Activated naive CD4-positive, alpha-beta T cell treated with anti-CD3 and anti-CD28 coated beads for 36 hours (primary cell): ENCODE measurements at regions of chr1 and their contacts with region 1.

Region 1: GRCh38 chr1:170074250-170075157 is at the start of gene KIFAP3:
- DNase-seq: peak; percentile 98
- H3K4me3 Mint-ChIP-seq: peak within 1 kb of the TSS; percentile 92
- H3K27ac Mint-ChIP-seq: peak within 1 kb of the TSS; percentile 74
- H3K4me1 Mint-ChIP-seq: peaks cover 48% of the 10 kb centered on the region
- H3K27me3 Mint-ChIP-seq: no peaks in the 10 kb centered on the region
- total RNA-seq, gene KIFAP3: 8.7 to 8.8 TPM

Region 2: DNA sequence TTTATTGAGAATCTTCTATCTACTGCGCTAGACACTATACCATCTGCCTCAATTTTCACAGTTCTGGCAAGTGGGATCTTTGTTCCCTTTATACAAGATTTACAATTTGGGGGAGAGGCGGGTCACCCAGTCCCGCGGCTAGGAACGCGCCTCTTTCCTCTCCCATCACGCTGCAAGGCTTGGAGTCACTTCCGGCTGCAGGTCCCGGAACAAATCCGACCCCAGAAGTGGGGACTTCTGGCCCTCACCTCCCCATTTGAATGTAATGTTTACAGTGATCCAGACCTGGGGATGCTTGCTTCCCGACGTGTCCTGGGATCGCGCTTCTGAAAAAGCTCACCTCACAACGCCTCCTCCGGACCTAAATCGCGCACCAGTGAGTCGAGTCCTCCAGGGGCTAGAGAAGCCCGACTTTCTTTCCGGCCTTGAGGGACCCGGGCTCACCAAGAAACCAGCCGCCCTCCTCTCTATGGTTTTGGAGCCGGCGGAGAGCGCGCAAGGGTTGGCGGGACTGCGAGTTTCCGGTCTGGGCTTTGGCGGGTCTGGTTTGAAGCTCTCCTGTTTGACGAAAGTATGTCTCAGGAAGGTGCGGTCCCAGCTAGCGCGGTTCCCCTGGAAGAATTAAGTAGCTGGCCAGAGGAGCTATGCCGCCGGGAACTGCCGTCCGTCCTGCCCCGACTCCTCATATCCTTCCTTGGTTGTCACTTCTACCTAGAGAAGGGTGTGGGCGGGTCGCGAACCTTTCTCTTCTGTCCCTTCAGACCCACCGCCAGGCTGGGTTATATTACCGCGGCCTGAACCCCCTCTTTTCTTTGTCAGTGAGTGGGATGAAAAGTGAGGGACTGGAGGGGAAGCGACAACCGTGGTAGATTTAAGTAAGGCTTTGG is 279.7 kb before region 1 on chr1 and contains the start of gene METTL18:
- CTCF ChIA-PET with region 1: no interaction called
- intact Hi-C with region 1: loop called (anchors 1 kb)
- DNase-seq: peak; percentile 97
- H3K4me3 Mint-ChIP-seq: peak within 1 kb of the TSS; percentile 99
- H3K27ac Mint-ChIP-seq: peak within 1 kb of the TSS; percentile 99
- H3K4me1 Mint-ChIP-seq: peaks cover 48% of the 10 kb centered on the region
- H3K27me3 Mint-ChIP-seq: no peaks in the 10 kb centered on the region
- total RNA-seq, gene METTL18: 10.6 to 11.1 TPM

Region 3: DNA sequence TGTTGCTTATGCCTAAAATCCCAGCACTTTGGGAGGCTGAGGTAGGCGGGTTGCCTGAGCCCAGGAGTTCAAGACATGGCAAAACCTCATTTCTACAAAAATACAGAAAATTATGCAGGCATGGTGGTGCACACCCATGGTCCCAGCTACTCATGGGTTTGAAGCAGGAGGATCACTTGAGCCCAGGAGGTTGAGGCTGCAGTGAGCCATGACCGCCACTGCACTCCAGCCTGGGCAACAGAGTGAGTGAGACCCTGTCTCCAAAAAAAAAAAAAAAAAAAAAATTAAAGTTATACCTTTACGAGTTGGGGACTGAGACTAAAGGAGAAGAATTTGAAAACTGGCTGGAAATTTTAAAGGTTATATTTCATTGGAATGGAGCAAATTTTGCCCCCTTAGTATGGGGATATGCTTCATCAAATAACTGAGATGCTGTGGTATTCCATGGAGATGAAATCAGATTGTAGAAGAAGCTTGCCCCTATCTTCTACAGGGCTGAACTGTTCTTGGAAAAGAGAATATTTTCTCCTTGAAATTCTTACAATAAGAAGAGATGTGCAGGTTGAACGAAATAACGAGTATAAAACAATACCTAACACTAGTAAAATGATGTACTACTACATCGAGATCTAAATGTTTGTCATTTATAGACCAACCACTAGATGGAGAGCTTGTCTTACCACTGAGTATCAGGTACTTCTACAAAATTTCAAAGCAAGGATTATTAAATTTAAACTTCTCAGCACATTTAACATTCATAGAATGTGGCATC is 145.9 kb before region 1 on chr1:
- CTCF ChIA-PET with region 1: interaction called, 4 read pairs
- intact Hi-C with region 1: loop called (anchors 1 kb)
- DNase-seq: no peak
- H3K4me3 Mint-ChIP-seq: no peak overlapping the region
- H3K27ac Mint-ChIP-seq: no peak overlapping the region
- H3K4me1 Mint-ChIP-seq: peaks cover 3% of the 10 kb centered on the region
- H3K27me3 Mint-ChIP-seq: no peaks in the 10 kb centered on the region

Region 4: GRCh38 chr1:170010443-170010842 is 64.1 kb before region 1 on chr1:
- CTCF ChIA-PET with region 1: no interaction called
- intact Hi-C with region 1: loop called (anchors 2 kb)
- DNase-seq: peak; percentile 49
- H3K4me3 Mint-ChIP-seq: no peak overlapping the region
- H3K27ac Mint-ChIP-seq: no peak overlapping the region
- H3K4me1 Mint-ChIP-seq: no peaks in the 10 kb centered on the region
- H3K27me3 Mint-ChIP-seq: no peaks in the 10 kb centered on the region

Region 5: GRCh38 chr1:170063109-170063826 is 11.2 kb before region 1 on chr1:
- CTCF ChIA-PET with region 1: interaction called, 4 read pairs
- intact Hi-C with region 1: loop called (anchors 2 kb)
- DNase-seq: no peak
- H3K4me3 Mint-ChIP-seq: no peak overlapping the region
- H3K27ac Mint-ChIP-seq: no peak overlapping the region
- H3K4me1 Mint-ChIP-seq: peaks cover 29% of the 10 kb centered on the region
- H3K27me3 Mint-ChIP-seq: no peaks in the 10 kb centered on the region

Region 6: GRCh38 chr1:170126696-170127095 is 52.2 kb after region 1 on chr1:
- CTCF ChIA-PET with region 1: no interaction called
- intact Hi-C with region 1: no loop called
- DNase-seq: peak; percentile 12
- H3K4me3 Mint-ChIP-seq: no peak overlapping the region
- H3K27ac Mint-ChIP-seq: no peak overlapping the region
- H3K4me1 Mint-ChIP-seq: no peaks in the 10 kb centered on the region
- H3K27me3 Mint-ChIP-seq: no peaks in the 10 kb centered on the region

Region 7: GRCh38 chr1:170531758-170532657 is 457.5 kb after region 1 on chr1 and contains the start of gene GORAB:
- CTCF ChIA-PET with region 1: no interaction called
- intact Hi-C with region 1: loop called (anchors 1 kb)
- DNase-seq: peak; percentile 93
- H3K4me3 Mint-ChIP-seq: no peak within 1 kb of the TSS
- H3K27ac Mint-ChIP-seq: no peak within 1 kb of the TSS
- H3K4me1 Mint-ChIP-seq: peaks cover 13% of the 10 kb centered on the region
- H3K27me3 Mint-ChIP-seq: no peaks in the 10 kb centered on the region
- total RNA-seq, gene GORAB: 9.5 TPM

Region 8: DNA sequence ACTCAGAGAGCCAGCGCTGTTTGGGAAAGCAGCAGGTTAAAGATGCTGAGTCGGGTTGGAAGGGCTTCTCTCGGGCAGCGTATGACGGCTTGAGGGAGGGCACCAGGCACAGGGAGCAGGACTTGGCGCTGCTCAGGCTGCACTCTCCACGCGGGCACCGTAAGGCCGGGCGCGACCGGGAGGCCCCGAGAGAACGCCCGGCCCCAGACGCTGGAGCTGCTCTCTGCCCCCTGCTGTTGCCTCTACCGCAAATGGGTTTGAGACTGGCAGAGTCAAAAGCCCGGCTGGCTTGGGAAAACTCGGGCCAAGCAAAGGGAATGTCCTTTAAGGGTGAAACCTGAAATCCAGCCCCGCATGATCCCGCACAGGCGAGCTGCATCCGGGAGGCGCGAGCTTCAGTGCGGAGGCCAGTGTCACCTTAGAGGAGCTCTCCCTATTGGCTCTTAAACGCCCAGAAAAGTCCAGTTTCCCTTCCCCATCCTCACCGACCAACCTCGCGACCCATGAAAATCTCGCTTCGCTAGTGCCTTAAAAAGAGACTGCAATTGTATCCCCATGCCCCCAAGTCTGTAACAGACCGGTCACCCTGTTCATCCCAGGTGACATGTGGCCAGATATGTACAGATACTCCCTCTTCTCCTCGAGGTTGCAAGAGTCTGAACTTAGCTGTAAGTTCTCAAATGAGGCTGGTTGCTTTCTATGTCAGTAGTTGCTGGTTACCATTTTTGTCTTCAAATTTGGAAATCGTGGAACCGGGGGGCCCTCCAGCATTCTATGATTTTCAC is 590.5 kb after region 1 on chr1:
- CTCF ChIA-PET with region 1: no interaction called
- intact Hi-C with region 1: loop called (anchors 10 kb)
- DNase-seq: no peak
- H3K4me3 Mint-ChIP-seq: peak overlapping the region; percentile 27
- H3K27ac Mint-ChIP-seq: no peak overlapping the region
- H3K4me1 Mint-ChIP-seq: peaks cover 51% of the 10 kb centered on the region
- H3K27me3 Mint-ChIP-seq: peaks cover 81% of the 10 kb centered on the region